Astrocyte of the cerebellum (primary cell): ENCODE measurements at regions of chr4 and their contacts with region 1.

Region 1: GRCh38 chr4:164154416-164154815 is 599.5 kb upstream of the SMIM31 start:
- DNase-seq: no peak
- H3K4me3 ChIP-seq: no peak overlapping the region
- CTCF ChIP-seq: no peak

Region 2: DNA sequence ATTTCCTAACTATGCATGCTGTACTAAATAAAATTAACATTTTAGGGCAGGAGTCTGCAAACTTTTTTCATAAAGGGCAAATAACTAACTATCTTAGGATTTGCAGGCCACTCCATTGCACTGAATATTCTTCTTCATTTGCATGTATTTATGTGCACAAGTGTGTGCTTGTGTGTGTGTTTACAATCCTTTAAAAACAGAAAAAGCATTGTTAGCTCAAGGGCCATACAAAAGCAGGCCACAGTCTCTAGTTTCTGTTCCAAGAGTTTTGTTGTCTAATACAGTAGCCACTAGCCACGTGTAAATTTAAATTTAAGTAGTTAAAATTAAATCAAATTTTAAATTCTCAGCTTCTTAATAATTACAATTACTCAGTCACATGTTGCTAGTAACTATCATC is 38.1 kb before region 1 on chr4:
- in situ Hi-C with region 1: no loop called
- DNase-seq: no peak
- H3K4me3 ChIP-seq: no peak overlapping the region
- CTCF ChIP-seq: no peak

Region 3: GRCh38 chr4:164197556-164197955 is 43.1 kb after region 1 on chr4:
- in situ Hi-C with region 1: loop called (anchors 5 kb)
- DNase-seq: no peak
- H3K4me3 ChIP-seq: no peak overlapping the region
- CTCF ChIP-seq: no peak

Region 4: DNA sequence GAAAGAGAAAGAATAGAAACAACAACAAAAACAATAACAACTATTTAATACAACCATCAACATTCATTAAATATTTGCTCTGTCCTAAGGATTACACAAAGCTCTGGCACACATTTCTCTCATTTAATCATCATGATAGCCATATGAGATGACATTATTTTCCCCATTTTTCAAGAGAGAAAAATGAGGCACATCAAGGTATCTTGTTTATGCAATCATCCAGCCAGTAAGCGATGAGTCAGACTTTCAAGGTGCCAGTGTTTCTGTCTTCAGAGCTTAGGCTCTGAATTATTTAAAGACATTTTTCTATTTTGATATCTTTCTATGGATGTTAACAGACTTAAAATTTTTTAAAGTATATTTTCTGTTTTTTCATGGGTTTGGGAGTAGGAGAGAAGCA is 57.7 kb after region 1 on chr4:
- in situ Hi-C with region 1: no loop called
- DNase-seq: no peak
- H3K4me3 ChIP-seq: no peak overlapping the region
- CTCF ChIP-seq: no peak